CD4-positive, alpha-beta memory T cell (primary cell): ENCODE measurements at regions of chr3 and their contacts with region 1.

Region 1: DNA sequence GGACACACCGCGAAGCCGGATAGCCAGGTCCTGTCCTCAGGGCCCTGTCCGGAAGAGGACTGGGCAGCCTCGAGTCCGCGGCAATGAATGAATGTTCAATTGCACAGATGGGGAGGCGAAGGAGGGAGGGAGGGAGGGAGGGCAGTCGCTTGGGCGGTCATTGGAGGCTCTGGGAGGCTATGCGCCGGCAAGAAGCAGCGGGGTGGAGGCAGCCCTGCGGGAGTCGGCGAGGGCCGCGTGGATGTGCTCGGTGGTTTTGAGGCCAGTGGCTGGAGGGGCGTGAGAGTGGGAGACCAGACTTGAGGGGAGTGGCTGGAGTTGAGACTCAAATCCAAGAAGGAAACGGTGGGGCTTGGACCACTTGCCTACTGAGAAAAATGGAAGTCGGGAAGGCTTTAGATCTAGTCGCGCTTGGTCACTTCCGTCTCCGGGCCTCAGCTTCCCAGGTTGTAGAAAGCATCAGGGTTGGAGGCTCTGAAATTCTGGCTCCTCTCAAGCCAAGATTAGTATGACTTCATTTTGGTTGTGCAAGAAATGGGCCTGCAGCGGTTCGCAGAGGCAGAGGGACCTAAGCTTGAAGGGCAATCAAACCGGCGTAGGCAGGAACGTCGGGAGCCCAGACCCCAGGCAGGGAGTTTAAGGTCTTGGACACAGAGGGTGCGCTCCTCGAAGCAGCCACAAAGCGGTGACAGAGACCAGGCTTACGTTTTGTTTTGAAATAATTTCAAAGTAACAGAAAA is 21.1 kb upstream of the PLXND1 start:
- DNase-seq: peak; percentile 68 to 73 (median 69)
- H3K4me3 ChIP-seq: peak overlapping the region; percentile 64 to 70
- H3K4me3 Mint-ChIP-seq: peak overlapping the region; percentile 87 to 93 (median 90)
- H3K27ac ChIP-seq: peak overlapping the region; percentile 18
- H3K27ac Mint-ChIP-seq: peak overlapping the region; percentile 64 to 92 (median 88)
- H3K4me1 ChIP-seq: peaks cover 10% of the 10 kb centered on the region
- H3K4me1 Mint-ChIP-seq: peaks cover 7 to 22% (median 17%) of the 10 kb centered on the region in 4 donors
- H3K27me3 ChIP-seq: no peaks in the 10 kb centered on the region
- H3K27me3 Mint-ChIP-seq: no peaks in the 10 kb centered on the region

Region 2: DNA sequence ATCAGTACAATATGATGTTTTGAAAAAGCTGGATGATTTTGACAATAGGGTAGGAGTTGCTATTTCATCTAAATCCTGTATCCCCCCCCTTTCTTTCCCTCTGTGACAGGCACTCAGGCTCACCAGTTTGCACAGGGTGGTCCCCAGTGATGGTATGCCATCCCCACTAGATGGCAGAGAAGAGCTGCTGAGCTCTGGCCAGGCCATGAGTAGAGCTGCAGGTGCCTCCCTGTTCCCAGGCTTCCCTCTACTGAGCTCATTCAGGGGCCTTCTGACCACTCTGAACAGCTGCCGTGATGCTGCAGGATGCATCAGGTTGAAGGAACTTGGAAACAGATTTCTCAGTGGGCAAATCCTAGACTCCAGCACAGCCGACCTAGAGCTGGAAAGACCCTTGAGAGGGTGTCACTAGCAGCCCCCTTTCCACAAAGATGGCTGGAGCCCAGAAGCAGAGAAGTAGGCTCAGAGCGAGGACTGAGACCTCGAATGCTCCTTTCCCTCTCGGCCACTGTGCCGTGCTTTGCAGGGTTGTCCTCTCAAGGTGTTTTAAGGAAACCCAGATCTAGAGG is 244.2 kb before region 1 on chr3:
- CTCF ChIA-PET with region 1: interaction called, 4 read pairs
- POLR2A ChIA-PET with region 1: no interaction called
- intact Hi-C with region 1: loop called (anchors 1 kb)
- DNase-seq: peak; percentile 13 to 50 (median 32)
- H3K4me3 ChIP-seq: no peak overlapping the region
- H3K4me3 Mint-ChIP-seq: no peak overlapping the region
- H3K27ac ChIP-seq: no peak overlapping the region
- H3K27ac Mint-ChIP-seq: peak overlapping the region in 1 of 7 donors; percentile 29
- H3K4me1 ChIP-seq: no peaks in the 10 kb centered on the region
- H3K4me1 Mint-ChIP-seq: peaks cover 0 to 3% (median 0%) of the 10 kb centered on the region in 4 donors
- H3K27me3 ChIP-seq: no peaks in the 10 kb centered on the region
- H3K27me3 Mint-ChIP-seq: no peaks in the 10 kb centered on the region

Region 3: GRCh38 chr3:129576514-129577352 is 50.9 kb before region 1 on chr3:
- CTCF ChIA-PET with region 1: interaction called, 14 read pairs
- POLR2A ChIA-PET with region 1: interaction called, 17 read pairs
- intact Hi-C with region 1: no loop called
- DNase-seq: peak; percentile 84 to 90 (median 89)
- H3K4me3 ChIP-seq: peak overlapping the region in 1 of 2 donors; percentile 12
- H3K4me3 Mint-ChIP-seq: peak overlapping the region in 7 of 8 donors; percentile 53 to 79 (median 71)
- H3K27ac ChIP-seq: peak overlapping the region; percentile 67
- H3K27ac Mint-ChIP-seq: peak overlapping the region; percentile 90 to 98 (median 98)
- H3K4me1 ChIP-seq: peaks cover 54% of the 10 kb centered on the region
- H3K4me1 Mint-ChIP-seq: peaks cover 17 to 58% (median 39%) of the 10 kb centered on the region in 4 donors
- H3K27me3 ChIP-seq: no peaks in the 10 kb centered on the region
- H3K27me3 Mint-ChIP-seq: no peaks in the 10 kb centered on the region

Region 4: GRCh38 chr3:129708328-129708861 is 80.8 kb after region 1 on chr3:
- CTCF ChIA-PET with region 1: no interaction called
- POLR2A ChIA-PET with region 1: no interaction called
- intact Hi-C with region 1: no loop called
- DNase-seq: no peak
- H3K4me3 ChIP-seq: no peak overlapping the region
- H3K4me3 Mint-ChIP-seq: no peak overlapping the region
- H3K27ac ChIP-seq: no peak overlapping the region
- H3K27ac Mint-ChIP-seq: no peak overlapping the region
- H3K4me1 ChIP-seq: no peaks in the 10 kb centered on the region
- H3K4me1 Mint-ChIP-seq: no peaks in the 10 kb centered on the region
- H3K27me3 ChIP-seq: no peaks in the 10 kb centered on the region
- H3K27me3 Mint-ChIP-seq: no peaks in the 10 kb centered on the region

Region 5: DNA sequence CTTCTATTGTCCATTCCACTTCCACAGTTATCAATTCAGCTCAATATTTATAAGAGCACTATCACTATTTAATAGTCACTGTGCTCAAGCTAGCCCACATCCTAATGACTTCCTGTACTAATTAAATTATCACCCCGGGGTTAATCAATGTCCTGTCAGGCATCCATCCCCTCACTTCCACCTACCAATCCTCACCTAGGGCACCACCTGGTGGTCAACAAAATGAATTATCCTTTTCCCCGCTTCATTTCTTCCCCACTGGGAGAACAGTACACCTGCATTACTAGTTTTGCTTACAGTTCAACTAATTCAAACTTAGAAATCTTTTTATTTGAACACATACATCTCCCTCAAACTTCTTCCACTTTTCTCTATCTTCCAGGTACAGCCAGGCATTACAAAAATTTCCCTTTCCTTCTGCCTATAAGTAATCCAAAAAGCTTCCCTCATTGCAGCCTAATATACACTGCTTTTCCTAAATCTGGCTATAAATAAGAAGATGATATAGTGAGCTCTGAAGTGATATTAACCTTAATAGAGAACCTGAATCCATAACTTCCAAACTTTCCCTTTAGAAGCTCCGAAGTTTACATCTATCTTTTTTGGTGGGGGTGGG is 197.4 kb after region 1 on chr3:
- CTCF ChIA-PET with region 1: interaction called, 40 read pairs
- POLR2A ChIA-PET with region 1: interaction called, 7 read pairs
- intact Hi-C with region 1: loop called (anchors 1 kb)
- DNase-seq: peak; percentile 38 to 59 (median 50)
- H3K4me3 ChIP-seq: no peak overlapping the region
- H3K4me3 Mint-ChIP-seq: no peak overlapping the region
- H3K27ac ChIP-seq: no peak overlapping the region
- H3K27ac Mint-ChIP-seq: peak overlapping the region in 4 of 7 donors; percentile 9 to 38 (median 18)
- H3K4me1 ChIP-seq: peaks cover 19% of the 10 kb centered on the region
- H3K4me1 Mint-ChIP-seq: peaks cover 17 to 32% (median 19%) of the 10 kb centered on the region in 4 donors
- H3K27me3 ChIP-seq: no peaks in the 10 kb centered on the region
- H3K27me3 Mint-ChIP-seq: no peaks in the 10 kb centered on the region

Region 6: GRCh38 chr3:129934234-129935123 is 306.9 kb after region 1 on chr3:
- CTCF ChIA-PET with region 1: interaction called, 16 read pairs
- POLR2A ChIA-PET with region 1: no interaction called
- intact Hi-C with region 1: loop called (anchors 1 kb)
- DNase-seq: peak in 4 of 5 donors; percentile 16 to 27 (median 24)
- H3K4me3 ChIP-seq: no peak overlapping the region
- H3K4me3 Mint-ChIP-seq: peak overlapping the region in 5 of 8 donors; percentile 18 to 50 (median 22)
- H3K27ac ChIP-seq: no peak overlapping the region
- H3K27ac Mint-ChIP-seq: peak overlapping the region in 1 of 7 donors; percentile 20
- H3K4me1 ChIP-seq: no peaks in the 10 kb centered on the region
- H3K4me1 Mint-ChIP-seq: peaks cover 9 to 20% (median 10%) of the 10 kb centered on the region in 4 donors
- H3K27me3 ChIP-seq: no peaks in the 10 kb centered on the region
- H3K27me3 Mint-ChIP-seq: peaks cover 2 to 5% of the 10 kb centered on the region in 2 donors